CD4-positive, alpha-beta memory T cell (primary cell): ENCODE measurements at regions of chr4 and their contacts with region 1.

Region 1: GRCh38 chr4:25312496-25313200 is at the start of gene ZCCHC4:
- DNase-seq: peak; percentile 87 to 96 (median 91)
- H3K4me3 ChIP-seq: peak within 1 kb of the TSS; percentile 85 to 86
- H3K4me3 Mint-ChIP-seq: peak within 1 kb of the TSS; percentile 97 to 100 (median 98)
- H3K27ac ChIP-seq: peak within 1 kb of the TSS; percentile 64
- H3K27ac Mint-ChIP-seq: peak within 1 kb of the TSS; percentile 89 to 99 (median 97)
- H3K4me1 ChIP-seq: peaks cover 17% of the 10 kb centered on the region
- H3K4me1 Mint-ChIP-seq: peaks cover 8 to 26% (median 15%) of the 10 kb centered on the region in 4 donors
- H3K27me3 ChIP-seq: no peaks in the 10 kb centered on the region
- H3K27me3 Mint-ChIP-seq: peaks cover 7 to 9% of the 10 kb centered on the region in 2 donors
- total RNA-seq, gene ZCCHC4: 13.0 to 14.4 TPM

Region 2: DNA sequence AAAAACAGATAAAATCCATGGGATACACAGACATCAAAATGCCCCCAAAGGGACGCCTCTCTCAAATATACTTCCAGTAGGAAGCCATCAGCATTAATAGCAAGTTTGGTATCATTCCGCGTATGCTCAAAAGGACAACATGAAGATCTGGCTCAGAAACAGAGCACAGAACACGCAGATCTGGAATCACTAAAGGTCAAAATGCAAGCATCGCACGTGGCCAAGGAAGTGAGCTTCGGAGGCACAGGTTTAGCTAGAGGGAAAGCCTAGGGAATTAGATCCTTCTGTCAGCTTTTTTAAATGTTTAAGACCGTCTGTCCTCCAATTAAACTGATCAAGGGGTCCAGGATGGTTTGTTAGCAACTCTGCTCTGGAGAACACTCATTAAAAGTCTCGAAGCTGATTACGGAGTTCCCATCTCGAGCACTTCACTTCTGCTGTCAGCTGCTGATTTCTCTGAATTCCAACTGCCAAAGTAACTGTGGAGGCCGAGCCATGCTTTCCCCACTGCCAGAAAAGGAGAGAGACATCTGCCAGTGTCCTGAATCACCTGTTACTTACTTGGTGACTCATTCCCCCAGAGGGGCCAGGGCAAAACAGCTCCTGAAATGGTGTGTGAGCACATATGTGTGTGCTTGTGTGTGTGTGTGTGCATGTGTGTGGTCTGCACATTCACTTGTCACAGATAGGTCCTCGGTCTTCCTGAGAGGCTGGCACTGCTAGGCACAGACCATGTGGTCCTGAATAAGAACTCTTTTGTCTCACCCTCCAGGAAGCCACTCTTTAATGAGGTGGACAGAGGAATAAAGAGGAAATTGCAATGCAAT is 1245.1 kb before region 1 on chr4:
- CTCF ChIA-PET with region 1: no interaction called
- POLR2A ChIA-PET with region 1: no interaction called
- intact Hi-C with region 1: no loop called
- DNase-seq: no peak
- H3K4me3 ChIP-seq: no peak overlapping the region
- H3K4me3 Mint-ChIP-seq: no peak overlapping the region
- H3K27ac ChIP-seq: no peak overlapping the region
- H3K27ac Mint-ChIP-seq: no peak overlapping the region
- H3K4me1 ChIP-seq: no peaks in the 10 kb centered on the region
- H3K4me1 Mint-ChIP-seq: no peaks in the 10 kb centered on the region
- H3K27me3 ChIP-seq: no peaks in the 10 kb centered on the region
- H3K27me3 Mint-ChIP-seq: no peaks in the 10 kb centered on the region

Region 3: GRCh38 chr4:24584175-24584850 is 728.3 kb before region 1 on chr4 and contains the start of gene DHX15:
- CTCF ChIA-PET with region 1: no interaction called
- POLR2A ChIA-PET with region 1: interaction called, 8 read pairs
- intact Hi-C with region 1: loop called (anchors 10 kb)
- DNase-seq: peak; percentile 91 to 94 (median 93)
- H3K4me3 ChIP-seq: peak within 1 kb of the TSS; percentile 85 to 96
- H3K4me3 Mint-ChIP-seq: peak within 1 kb of the TSS; percentile 97 to 100 (median 99)
- H3K27ac ChIP-seq: peak within 1 kb of the TSS; percentile 98
- H3K27ac Mint-ChIP-seq: peak within 1 kb of the TSS; percentile 97 to 100 (median 99)
- H3K4me1 ChIP-seq: peaks cover 45% of the 10 kb centered on the region
- H3K4me1 Mint-ChIP-seq: peaks cover 26 to 48% (median 40%) of the 10 kb centered on the region in 4 donors
- H3K27me3 ChIP-seq: no peaks in the 10 kb centered on the region
- H3K27me3 Mint-ChIP-seq: peaks cover 0 to 3% of the 10 kb centered on the region in 2 donors
- total RNA-seq, gene DHX15: 129 to 131 TPM

Region 4: DNA sequence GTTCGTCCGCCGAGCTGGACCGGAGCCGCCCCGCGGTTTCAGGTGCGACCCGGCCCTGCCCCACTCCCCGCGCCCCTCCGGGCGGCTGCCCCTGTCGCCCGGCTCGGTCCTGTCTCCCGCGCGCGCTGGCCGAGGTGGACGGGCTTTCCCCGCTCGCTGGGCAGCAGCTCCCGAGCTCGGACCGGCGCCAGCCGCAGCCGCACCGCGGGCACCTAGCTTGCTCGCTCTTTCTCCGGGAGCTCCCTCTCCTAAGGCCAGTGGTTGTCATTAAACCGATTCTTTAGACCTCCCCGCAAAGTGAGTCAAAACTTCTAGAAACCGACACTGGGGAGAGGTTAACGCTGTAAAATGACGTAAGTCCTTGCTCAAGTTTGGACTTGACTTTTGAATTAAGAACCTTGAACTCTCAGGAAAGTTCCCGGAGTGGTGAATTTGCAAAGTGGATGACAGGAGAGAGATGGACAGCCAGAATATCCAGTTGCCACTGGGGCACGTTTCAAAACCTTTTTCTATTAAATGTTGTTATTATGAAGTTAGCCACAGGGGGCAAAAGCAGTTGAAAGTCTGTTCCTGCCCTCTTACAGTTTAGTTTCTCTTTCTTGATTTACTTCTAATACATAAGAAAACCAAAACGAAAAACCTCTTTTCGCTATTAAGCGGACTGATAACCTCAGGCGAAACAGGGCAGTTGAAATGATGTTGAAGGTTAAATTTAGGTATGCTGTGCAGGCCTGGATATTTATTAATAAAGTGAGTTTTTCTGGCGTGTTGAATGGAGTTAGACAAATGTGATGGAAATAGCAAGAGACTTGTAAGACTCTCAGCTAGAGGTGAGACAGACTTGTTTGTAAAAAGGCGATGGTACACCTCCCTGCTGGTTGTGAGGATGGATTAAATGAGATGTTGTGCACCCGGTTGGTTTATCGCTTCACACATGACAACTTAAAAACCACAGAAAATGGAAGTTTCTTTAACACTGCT is 78.0 kb before region 1 on chr4:
- CTCF ChIA-PET with region 1: interaction called, 107 read pairs
- POLR2A ChIA-PET with region 1: interaction called, 58 read pairs
- intact Hi-C with region 1: loop called (anchors 1 kb)
- DNase-seq: peak; percentile 73 to 82 (median 77)
- H3K4me3 ChIP-seq: peak overlapping the region; percentile 55 to 87
- H3K4me3 Mint-ChIP-seq: peak overlapping the region; percentile 83 to 98 (median 94)
- H3K27ac ChIP-seq: peak overlapping the region; percentile 87
- H3K27ac Mint-ChIP-seq: peak overlapping the region; percentile 85 to 98 (median 96)
- H3K4me1 ChIP-seq: peaks cover 37% of the 10 kb centered on the region
- H3K4me1 Mint-ChIP-seq: peaks cover 24 to 76% (median 39%) of the 10 kb centered on the region in 4 donors
- H3K27me3 ChIP-seq: no peaks in the 10 kb centered on the region
- H3K27me3 Mint-ChIP-seq: no peaks in the 10 kb centered on the region

Region 5: DNA sequence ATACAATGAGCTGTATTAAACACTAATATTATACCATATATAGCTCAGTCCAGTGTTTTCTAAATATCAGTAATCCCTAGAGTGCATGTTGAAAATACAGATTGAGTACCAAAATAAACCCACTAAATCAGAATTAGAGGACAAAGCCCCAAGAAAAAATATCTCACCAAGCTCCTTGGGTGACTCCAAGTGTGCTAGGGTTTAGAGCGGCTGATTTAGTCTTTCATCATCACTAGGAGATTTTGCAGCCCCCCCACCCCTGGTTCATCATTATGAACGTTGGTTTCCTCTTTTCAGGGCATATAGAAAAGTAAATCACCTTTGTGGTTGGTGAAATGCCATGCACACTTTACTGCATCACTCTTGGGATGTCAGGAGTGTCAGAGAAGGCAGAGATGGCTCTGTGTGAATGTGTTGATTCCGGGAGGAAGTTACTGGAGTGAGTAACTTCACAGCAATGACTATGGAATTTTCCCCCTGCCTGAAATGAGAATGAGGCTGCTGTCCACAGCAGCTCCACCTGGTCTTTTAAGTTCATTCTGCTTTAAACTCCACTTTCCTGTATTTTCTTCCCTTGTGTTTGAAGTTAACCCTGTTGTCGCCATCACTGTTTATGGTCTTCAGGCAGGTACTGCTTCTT is 39.2 kb after region 1 on chr4:
- CTCF ChIA-PET with region 1: interaction called, 10 read pairs
- POLR2A ChIA-PET with region 1: no interaction called
- intact Hi-C with region 1: no loop called
- DNase-seq: no peak
- H3K4me3 ChIP-seq: no peak overlapping the region
- H3K4me3 Mint-ChIP-seq: no peak overlapping the region
- H3K27ac ChIP-seq: no peak overlapping the region
- H3K27ac Mint-ChIP-seq: no peak overlapping the region
- H3K4me1 ChIP-seq: no peaks in the 10 kb centered on the region
- H3K4me1 Mint-ChIP-seq: no peaks in the 10 kb centered on the region
- H3K27me3 ChIP-seq: no peaks in the 10 kb centered on the region
- H3K27me3 Mint-ChIP-seq: no peaks in the 10 kb centered on the region

Region 6: DNA sequence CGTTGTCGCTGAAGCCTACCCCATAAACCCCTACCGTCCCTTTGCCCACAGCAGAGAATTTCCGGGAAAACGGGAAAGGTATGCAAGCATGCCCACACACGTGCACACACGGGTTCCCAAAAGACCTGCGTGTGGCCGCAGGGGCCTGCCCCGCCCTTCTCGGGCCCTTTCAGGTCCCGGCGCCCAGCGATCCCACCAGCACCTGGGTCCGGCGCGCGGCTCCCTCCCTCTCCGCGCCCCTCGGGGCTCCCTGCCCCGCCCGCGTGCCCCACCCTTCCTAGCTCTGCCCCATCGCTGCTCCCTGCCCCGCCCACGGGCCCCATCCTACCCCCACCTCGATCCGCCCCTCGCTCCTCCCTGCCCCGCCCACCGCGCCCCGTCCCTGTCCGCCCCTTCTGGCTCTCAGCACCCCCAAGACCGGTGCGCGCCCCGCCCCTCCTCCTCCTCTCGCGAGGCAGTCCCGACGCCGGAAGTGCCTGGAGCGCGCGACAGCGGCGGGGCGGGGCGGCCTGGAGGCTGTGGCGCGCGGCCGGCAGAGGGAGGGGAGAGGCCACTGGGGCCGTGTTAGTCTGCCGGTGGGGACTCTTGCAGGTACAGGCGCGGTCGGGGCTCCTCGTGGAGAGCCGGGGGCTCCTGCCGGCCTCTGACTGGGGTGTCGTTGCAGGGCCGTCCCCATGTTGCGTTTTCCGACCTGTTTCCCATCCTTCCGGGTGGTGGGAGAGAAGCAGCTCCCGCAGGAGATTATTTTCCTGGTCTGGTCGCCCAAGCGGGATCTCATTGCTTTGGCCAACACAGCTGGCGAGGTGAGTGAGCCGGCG is 64.3 kb after region 1 on chr4 and contains the start of gene ANAPC4:
- CTCF ChIA-PET with region 1: interaction called, 22 read pairs
- POLR2A ChIA-PET with region 1: interaction called, 26 read pairs
- intact Hi-C with region 1: loop called (anchors 1 kb)
- DNase-seq: peak; percentile 92 to 97 (median 93)
- H3K4me3 ChIP-seq: peak within 1 kb of the TSS; percentile 57 to 95
- H3K4me3 Mint-ChIP-seq: peak within 1 kb of the TSS in 1 of 8 donors; percentile 80
- H3K27ac ChIP-seq: peak within 1 kb of the TSS; percentile 73
- H3K27ac Mint-ChIP-seq: peak within 1 kb of the TSS; percentile 65 to 92 (median 89)
- H3K4me1 ChIP-seq: peaks cover 24% of the 10 kb centered on the region
- H3K4me1 Mint-ChIP-seq: peaks cover 3 to 13% (median 10%) of the 10 kb centered on the region in 4 donors
- H3K27me3 ChIP-seq: no peaks in the 10 kb centered on the region
- H3K27me3 Mint-ChIP-seq: no peaks in the 10 kb centered on the region
- total RNA-seq, gene ANAPC4: 61.8 to 63.7 TPM